ENCODE measurements at regions of chr9 and their contacts with region 1.

Region 1: GRCh38 chr9:105396441-105396840 is 51.4 kb upstream of the FSD1L start:
- DNase-seq: no peak
- CTCF ChIP-seq: no peak

Region 2: GRCh38 chr9:105385381-105385985 is 11.0 kb before region 1 on chr9:
- CTCF ChIA-PET with region 1: interaction called, 10 read pairs
- POLR2A ChIA-PET with region 1: no interaction called
- DNase-seq: peak; percentile 55
- CTCF ChIP-seq: no peak

Region 3: DNA sequence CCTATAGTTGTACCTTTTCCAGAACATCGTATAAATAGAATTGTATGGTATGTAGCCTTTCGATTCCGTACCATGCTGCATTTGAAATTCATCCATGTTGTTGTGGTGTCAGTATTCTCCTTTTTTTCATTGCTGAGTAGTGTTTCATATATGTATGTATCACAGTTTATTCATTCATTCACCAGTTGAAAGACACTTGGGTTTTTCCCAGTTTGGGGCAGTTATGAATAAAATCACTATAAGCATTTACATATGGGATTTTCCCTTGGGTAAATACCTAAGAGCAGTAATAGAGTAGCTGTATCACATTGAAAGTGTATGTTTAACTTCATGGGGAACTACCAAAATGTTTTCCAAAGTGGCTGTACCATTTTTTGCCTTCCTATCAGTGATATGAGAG is 145.4 kb after region 1 on chr9:
- CTCF ChIA-PET with region 1: no interaction called
- POLR2A ChIA-PET with region 1: no interaction called
- DNase-seq: no peak
- CTCF ChIP-seq: no peak